ENCODE measurements at regions of chr7 and their contacts with region 1.

Region 1: GRCh38 chr7:111540199-111540815 is 22.0 kb downstream of the IMMP2L start:
- DNase-seq: no peak
- ATAC-seq: no peak
- H3K4me3 ChIP-seq: no peak overlapping the region
- H3K27ac ChIP-seq: no peak overlapping the region
- H3K4me1 ChIP-seq: no peaks in the 10 kb centered on the region
- H3K27me3 ChIP-seq: no peaks in the 10 kb centered on the region
- CTCF ChIP-seq: no peak

Region 2: GRCh38 chr7:110856704-110857103 is 683.6 kb before region 1 on chr7:
- CTCF ChIA-PET with region 1: no interaction called
- POLR2A ChIA-PET with region 1: no interaction called
- in situ Hi-C with region 1: no loop called
- intact Hi-C with region 1: no loop called
- DNase-seq: no peak
- ATAC-seq: no peak
- H3K4me3 ChIP-seq: no peak overlapping the region
- H3K27ac ChIP-seq: no peak overlapping the region
- H3K4me1 ChIP-seq: no peaks in the 10 kb centered on the region
- H3K27me3 ChIP-seq: no peaks in the 10 kb centered on the region
- CTCF ChIP-seq: no peak

Region 3: DNA sequence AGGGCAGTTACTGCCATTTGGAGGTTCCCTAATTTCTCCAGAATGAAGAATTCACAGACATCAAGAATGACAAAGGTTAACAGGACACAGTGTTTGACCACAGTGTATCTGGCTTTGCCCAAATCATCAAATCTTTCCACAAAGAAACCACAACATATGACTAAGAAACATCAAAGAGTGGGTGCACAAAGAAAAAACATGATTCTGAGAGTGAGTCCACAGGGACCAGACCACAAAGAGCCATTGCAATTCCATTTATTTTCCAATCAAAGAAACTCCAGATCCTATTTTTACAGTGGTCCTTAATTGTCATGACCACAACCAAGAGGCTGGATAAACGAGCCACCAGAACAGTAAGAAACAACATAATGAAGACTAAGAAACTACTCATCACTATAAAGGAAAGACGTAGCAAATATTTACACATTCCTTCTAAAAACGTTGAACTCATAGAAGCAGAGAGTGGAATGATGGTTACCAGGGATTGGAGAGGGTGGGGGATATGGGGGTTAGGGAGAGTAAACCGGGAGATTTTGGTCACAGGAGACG is 379.4 kb after region 1 on chr7:
- CTCF ChIA-PET with region 1: no interaction called
- POLR2A ChIA-PET with region 1: interaction called, 22 read pairs
- in situ Hi-C with region 1: no loop called
- intact Hi-C with region 1: no loop called
- DNase-seq: no peak
- ATAC-seq: no peak
- H3K4me3 ChIP-seq: no peak overlapping the region
- H3K27ac ChIP-seq: no peak overlapping the region
- H3K4me1 ChIP-seq: 0 out of 2 replicates have a peak, but pooled peaks cover 2% of the 10 kb centered on the region
- H3K27me3 ChIP-seq: no peaks in the 10 kb centered on the region
- CTCF ChIP-seq: no peak